ENCODE measurements at regions of chr16 and their contacts with region 1.

Region 1: DNA sequence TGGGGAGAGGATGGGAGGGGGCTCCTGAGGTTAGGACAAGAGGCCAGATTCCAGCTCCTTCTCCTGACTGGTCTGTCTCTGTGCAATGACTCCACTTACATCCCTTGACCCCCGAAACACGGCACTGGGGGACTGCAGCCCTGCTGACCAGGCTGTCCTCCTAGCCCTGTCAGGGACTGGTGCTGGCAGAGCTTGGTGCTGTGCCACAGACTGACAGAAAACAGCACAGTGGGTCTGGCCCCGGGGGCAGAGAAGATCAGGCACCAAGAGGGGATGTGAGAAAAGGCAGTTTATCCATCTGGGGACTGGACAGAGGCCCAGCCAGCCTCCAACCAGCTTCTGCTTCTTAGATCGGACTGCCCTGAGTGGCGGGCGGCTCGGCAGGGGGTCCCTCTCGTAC is 19.4 kb downstream of the SLC38A7 start:
- DNase-seq: no peak

Region 2: DNA sequence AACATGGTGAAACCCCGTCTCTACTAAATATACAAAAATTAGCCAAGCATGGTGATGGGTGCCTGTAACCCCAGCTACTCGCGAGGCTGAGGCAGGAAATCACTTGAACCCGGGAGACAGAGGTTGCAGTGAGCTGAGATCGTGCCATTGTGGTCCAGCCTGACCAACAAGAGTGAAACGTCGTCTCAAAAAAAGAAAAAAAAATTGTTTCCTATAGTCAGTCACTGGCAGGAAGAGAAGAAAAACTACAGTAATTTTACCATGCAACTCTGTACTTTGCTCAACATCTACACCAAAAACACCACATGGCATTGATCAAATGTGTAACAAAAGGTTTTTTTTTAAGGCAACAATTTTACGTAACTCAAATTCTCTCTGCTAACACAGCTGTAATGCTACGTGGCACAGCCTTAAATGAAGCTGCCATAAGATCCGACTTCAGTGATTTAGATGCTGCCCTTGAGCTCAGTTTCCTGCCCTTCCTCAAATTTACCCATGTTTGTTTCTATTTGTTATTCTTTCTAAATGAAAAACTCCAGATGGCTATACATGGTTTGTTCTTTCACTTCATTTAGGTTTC is 75.8 kb before region 1 on chr16:
- intact Hi-C with region 1: no loop called
- DNase-seq: no peak

Region 3: GRCh38 chr16:59645194-59645593 is 980.0 kb after region 1 on chr16:
- intact Hi-C with region 1: loop called in 1 of 2 experiments (anchors 5 kb)
- DNase-seq: no peak